ENCODE measurements at regions of chr1 and their contacts with region 1.

Region 1: DNA sequence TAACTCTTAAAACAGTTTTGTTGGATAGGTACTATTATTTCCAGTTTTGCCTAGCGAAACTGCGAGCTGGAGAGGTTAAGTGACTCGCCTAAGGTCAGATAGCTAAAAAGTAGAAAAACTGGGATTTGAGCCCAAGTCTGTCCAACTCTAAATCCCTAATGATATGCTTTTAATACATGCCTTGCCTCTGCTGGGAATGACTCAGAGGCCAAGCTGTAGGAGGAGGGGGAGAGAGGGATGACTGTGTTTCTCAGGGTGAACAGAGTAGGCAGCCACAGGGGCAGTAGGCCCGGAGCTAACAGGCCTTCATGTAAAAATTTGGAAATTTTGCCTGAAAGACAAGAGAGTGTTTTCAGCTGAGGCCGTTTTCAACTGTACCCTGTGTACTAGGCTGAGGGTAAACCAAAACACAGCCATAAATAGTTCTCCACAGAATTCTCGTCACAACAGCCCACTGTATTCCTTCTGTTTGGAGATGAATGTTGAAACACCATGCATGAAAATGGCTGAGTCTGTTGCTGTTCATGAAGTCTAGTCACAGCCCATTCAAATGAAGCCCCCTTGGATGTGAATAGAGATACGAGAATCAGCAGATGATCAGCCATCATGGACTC is 107.5 kb upstream of the HOOK1 start:
- DNase-seq: peak; percentile 90
- H3K4me3 Mint-ChIP-seq: no peak overlapping the region
- H3K27ac Mint-ChIP-seq: peak overlapping the region; percentile 33
- H3K4me1 Mint-ChIP-seq: peaks cover 46% of the 10 kb centered on the region
- H3K27me3 Mint-ChIP-seq: no peaks in the 10 kb centered on the region
- CTCF ChIP-seq: no peak

Region 2: DNA sequence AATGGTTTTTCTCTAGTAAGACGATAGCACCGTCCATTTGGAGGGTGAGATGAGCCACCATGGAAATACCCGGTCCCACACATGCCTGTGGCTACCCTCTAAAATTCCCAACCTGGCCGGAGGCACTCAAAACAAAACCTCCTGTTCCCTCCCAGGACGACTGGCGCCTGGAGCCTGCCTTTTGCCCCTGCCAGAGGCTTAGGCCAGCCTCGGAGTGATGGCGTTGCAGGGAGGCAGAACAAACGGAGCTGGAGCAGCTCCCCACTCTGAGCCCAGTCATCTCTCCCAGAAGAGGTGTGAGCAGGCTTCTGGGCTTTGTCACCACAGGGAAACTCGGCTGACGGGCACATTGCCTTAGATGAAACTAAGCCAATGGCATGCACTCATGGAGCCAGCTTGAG is 106.2 kb before region 1 on chr1:
- CTCF ChIA-PET with region 1: no interaction called
- POLR2A ChIA-PET with region 1: no interaction called
- intact Hi-C with region 1: no loop called
- DNase-seq: no peak
- H3K4me3 Mint-ChIP-seq: no peak overlapping the region
- H3K27ac Mint-ChIP-seq: no peak overlapping the region
- H3K4me1 Mint-ChIP-seq: peaks cover 14% of the 10 kb centered on the region
- H3K27me3 Mint-ChIP-seq: no peaks in the 10 kb centered on the region
- CTCF ChIP-seq: no peak

Region 3: GRCh38 chr1:59718064-59718988 is 11.0 kb after region 1 on chr1:
- CTCF ChIA-PET with region 1: interaction called, 15 read pairs
- POLR2A ChIA-PET with region 1: interaction called, 3 read pairs
- intact Hi-C with region 1: no loop called
- DNase-seq: peak; percentile 53
- H3K4me3 Mint-ChIP-seq: no peak overlapping the region
- H3K27ac Mint-ChIP-seq: no peak overlapping the region
- H3K4me1 Mint-ChIP-seq: no peaks in the 10 kb centered on the region
- H3K27me3 Mint-ChIP-seq: no peaks in the 10 kb centered on the region
- CTCF ChIP-seq: peak; percentile 44